ENCODE measurements at regions of chr6 and their contacts with region 1.

Region 1: DNA sequence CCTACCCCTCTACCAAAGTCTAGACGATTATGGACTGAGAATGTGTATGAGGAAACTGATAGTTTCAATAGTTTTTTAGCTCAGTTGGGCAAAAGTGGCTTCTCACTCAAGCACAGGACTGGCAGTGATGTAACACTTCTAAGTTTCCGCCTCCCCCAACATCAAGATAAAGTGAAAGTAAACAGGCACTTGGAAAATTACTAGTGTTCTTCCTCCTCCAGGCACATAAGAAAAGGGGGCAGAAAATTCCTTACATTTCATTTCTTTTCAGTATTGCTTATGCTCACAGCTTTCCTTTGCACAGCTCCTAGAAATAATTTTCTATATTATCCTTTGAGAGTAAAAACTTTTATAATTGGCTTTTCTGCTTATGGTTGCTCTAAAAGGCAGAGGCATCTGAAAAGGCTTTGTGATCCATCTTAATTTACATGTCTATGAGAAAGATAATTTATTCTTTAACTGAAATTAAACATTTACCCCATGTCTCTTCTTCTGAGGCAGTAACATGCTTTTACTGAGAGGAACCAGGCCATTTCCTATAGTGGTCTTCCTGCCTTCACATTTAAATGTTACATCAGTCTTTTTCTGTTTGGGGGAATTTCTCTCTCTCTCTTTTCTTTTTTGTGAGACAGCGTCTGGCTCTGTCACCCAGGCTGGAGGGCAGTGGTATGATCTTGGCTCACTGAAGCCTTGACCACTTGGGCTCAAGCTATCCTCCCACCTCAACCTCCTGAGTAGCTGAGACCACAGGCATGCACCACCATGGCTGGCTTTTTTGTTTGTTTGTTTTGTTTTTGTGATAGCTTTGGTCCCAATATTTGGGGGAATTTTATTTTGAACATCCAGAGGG is 65.0 kb upstream of the EEF1A1 start:
- DNase-seq: peak in 1 of 2 donors; percentile 69
- H3K4me3 ChIP-seq: no peak overlapping the region
- CTCF ChIP-seq: no peak
- POLR2A ChIP-seq: no peak

Region 2: DNA sequence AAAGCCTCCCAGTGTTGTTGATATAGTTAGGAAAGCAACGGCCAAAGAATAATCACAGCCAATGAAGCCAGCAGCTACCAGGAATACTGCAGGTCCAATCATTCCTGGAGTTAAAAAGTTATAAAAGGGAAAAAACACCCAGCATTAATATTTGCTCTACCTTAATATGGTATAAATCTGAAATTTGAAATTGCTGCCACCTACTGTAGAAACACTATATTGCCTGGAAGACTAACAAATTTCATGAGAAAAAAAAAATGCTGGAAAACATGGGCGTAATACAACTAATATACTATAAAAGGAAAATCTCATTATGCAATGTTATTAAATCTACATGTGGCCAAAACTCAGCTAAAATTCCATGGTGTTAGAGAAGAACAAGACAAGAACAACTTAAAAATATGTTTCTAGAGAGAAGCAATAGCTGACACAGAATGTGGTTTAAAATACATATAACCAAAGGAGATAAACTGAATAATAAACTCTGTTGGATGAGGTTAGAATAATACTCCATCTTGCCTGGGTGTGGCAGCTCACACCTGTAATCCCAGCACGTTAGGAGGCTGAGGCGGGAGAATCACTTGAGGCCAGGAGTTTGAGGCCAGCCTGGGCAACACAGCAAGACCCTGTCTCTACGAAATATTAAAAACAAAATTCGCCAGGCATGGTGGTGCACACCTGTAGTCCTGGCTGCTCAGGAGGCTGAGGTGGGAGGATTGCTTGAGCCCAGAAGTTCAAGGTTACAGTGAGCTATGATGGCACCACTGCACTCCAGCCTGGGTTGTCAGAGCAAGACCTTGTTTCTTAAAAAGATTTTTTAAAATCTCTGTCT is 24.9 kb after region 1 on chr6:
- intact Hi-C with region 1: no loop called
- DNase-seq: peak in 1 of 2 donors; percentile 66
- H3K4me3 ChIP-seq: no peak overlapping the region
- CTCF ChIP-seq: no peak
- POLR2A ChIP-seq: no peak

Region 3: GRCh38 chr6:73631849-73632248 is 46.1 kb after region 1 on chr6:
- intact Hi-C with region 1: loop called (anchors 1 kb)
- DNase-seq: no peak
- H3K4me3 ChIP-seq: no peak overlapping the region
- CTCF ChIP-seq: no peak
- POLR2A ChIP-seq: no peak

Measured in lower leg skin (tissue), 4 donors.